Left ventricle myocardium superior (tissue), 1 donor: ENCODE measurements at regions of chr1 and their contacts with region 1.

Region 1: DNA sequence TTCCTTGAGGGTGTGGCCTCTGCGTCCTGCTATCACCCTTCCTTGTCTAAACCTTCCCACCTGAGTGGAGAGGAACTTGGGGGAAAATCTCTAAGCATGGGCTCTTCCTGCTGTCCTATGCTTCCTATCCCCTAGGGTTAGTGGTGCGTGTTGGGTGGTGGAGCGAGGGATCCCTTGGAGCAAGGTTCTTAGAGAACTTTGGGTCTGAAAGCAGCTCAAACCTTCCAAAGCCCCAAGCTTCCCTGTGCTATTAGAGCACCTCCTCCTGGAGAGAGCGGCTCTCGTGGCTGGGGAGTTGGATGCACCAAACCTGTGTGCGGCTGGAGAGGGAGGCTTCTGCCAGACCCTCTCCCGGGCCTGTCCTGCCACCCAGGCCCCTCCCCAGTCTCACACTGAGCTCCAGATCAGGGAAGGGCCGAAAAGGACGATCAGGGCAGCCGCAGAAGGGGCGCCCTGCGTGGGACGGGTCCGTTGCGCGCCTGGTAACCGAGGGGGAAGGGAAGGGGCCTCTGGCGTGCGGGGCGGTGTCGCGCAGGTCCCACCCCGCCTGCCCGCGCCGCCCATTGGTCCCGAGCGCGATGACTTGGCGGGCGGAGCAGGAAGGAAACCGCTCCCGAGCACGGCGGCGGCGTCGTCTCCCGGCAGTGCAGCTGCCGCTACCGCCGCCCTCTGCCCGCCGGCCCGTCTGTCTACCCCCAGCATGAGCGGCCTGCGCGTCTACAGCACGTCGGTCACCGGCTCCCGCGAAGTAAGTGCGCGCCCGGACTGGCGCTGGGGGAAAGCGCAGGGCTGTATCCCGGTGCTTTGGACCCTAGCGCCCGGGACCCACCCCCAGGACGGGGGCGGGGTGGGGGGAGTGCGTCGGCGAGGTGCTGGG is at the start of gene SH3BGRL3:
- DNase-seq: peak; percentile 95
- ATAC-seq: peak; percentile 81
- total RNA-seq, gene SH3BGRL3: 34.7 TPM

Region 2: GRCh38 chr1:26321315-26322041 is 41.8 kb after region 1 on chr1:
- intact Hi-C with region 1: loop called (anchors 5 kb)
- DNase-seq: peak; percentile 94
- ATAC-seq: peak; percentile 93